Dendritic cell treated with granulocyte-macrophage colony-stimulating factor and Interleukin-4, amounts not matched to agents 40 ng/mL and 50 ng/mL, for 4 days (primary cell): ENCODE measurements at regions of chr9 and their contacts with region 1.

Region 1: GRCh38 chr9:72856972-72857623 is 95.8 kb downstream of the ALDH1A1 start:
- H3K4me3 Mint-ChIP-seq: no peak overlapping the region
- H3K27ac Mint-ChIP-seq: no peak overlapping the region
- H3K4me1 Mint-ChIP-seq: peaks cover 10% of the 10 kb centered on the region
- H3K27me3 Mint-ChIP-seq: no peaks in the 10 kb centered on the region

Region 2: DNA sequence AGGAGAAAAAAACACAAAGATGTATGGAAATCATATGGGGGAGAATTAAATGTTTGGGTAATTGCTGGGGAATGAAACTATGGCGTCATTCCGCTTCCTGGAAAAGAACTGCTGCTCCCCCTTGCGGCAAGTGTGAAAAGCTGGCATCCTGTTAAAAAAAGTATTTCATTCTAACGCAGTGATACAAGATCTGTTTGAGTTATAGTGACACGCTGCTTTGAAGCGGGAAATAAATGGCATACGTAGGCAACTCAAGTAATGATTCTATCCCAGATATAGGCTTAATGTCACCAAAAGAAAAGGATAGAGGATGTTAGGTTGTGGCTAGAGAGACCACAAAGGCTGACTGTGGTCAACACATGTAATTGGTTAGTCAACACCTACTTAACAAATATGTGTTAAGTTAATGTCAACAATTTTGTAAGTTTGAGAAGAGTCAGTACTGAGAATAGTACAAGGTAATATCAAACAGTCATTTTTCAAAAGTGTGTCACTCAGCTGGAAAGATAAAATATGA is 166.0 kb after region 1 on chr9:
- intact Hi-C with region 1: loop called (anchors 1 kb)
- H3K4me3 Mint-ChIP-seq: no peak overlapping the region
- H3K27ac Mint-ChIP-seq: no peak overlapping the region
- H3K4me1 Mint-ChIP-seq: no peaks in the 10 kb centered on the region
- H3K27me3 Mint-ChIP-seq: no peaks in the 10 kb centered on the region

Region 3: DNA sequence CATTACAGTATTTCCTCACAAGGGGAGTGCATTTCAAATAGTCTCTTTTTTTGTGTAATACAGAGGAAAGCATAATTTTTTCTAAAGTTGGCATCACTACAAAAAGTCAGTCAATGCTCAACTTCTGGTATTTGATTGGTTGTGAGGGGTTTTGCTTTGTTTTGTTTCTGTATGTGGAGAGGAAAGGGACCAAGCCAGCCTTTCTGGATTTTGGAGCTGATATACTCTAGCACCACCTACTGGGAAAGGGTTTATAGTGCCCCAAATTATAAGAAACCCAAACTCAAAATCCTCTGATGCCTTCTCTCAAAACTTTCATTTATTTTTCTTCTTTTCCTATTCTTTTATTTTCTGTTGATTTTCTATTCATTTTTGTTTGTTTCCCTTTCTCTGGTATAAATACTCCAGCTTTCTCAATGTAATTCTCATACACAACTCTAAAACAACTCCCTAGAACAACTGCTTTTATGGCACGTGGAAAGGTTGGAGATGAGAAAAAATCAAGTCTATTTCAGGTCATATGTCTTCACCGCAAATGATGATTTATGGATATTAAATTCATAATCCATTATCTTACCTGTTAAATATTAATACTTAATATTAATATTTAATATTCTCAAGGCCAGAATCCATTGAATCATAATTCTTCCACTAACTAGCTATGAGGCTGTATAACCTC is 225.0 kb after region 1 on chr9:
- intact Hi-C with region 1: loop called (anchors 1 kb)
- H3K4me3 Mint-ChIP-seq: no peak overlapping the region
- H3K27ac Mint-ChIP-seq: no peak overlapping the region
- H3K4me1 Mint-ChIP-seq: no peaks in the 10 kb centered on the region
- H3K27me3 Mint-ChIP-seq: no peaks in the 10 kb centered on the region

Region 4: DNA sequence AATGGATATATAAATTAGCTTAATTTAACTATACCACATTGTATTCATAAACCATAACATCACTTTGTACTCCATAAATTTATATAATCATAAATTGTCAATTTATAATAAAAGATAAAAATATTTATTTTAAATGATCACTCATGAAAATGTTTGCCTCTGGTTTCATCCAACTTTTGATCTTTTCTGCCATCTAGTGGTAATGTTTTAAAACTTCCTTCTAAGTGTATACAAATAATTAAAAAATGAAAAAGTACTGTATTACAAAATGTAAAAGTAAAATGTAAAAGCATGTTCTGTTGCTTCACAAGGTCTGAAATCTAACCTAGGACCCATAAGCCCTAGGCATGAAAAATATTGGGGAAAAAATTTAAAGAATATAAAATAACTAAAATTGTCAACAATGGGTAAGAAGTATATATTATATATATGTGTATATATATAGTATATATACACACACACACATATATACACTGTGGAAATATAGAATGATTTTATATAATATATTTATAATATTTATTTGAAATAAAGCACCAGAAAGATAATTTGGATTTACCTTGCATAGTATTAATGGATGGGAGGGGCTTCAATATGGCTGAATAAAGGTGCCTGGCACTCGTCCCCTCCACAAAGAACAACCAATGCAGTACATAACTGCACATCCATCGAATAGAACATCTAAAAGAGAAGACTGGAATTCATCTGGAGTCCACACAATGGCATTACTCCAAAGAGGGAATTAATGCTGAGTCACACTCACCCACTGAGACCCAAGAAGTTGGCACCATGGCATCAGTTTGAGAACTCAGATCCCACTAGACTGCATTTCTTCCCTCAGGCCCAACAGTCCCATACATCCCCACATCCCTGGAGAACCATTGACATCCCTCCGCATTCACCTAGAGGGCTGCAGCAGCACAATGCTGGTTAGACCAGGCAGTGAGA is 327.1 kb after region 1 on chr9:
- intact Hi-C with region 1: loop called (anchors 10 kb)
- H3K4me3 Mint-ChIP-seq: no peak overlapping the region
- H3K27ac Mint-ChIP-seq: no peak overlapping the region
- H3K4me1 Mint-ChIP-seq: no peaks in the 10 kb centered on the region
- H3K27me3 Mint-ChIP-seq: no peaks in the 10 kb centered on the region